ENCODE measurements at regions of chr7 and their contacts with region 1.

Region 1: DNA sequence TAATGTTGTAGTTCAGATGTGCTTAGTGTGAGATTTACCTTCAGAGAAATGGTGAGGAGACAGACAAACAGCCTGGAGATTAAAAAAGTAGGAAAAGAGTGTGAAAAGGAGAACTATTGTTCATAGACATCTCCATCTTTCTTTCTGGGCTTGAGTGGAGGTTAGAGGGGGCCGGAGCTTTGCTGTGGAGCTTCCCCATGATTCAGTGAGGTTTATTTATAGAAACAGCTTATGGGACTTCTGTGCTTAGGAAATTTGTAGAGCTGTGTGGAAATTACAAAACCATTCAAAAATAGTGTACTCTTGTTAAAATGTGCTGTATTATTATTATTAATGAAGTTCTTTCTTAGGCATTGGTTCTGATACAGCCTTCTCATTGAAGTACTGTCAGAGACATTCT is 8.5 kb upstream of the TCAF1 start:
- DNase-seq: no peak
- H3K4me3 Mint-ChIP-seq: no peak overlapping the region
- H3K27ac Mint-ChIP-seq: no peak overlapping the region
- H3K4me1 Mint-ChIP-seq: no peaks in the 10 kb centered on the region
- H3K27me3 Mint-ChIP-seq: peaks cover 3% of the 10 kb centered on the region

Region 2: DNA sequence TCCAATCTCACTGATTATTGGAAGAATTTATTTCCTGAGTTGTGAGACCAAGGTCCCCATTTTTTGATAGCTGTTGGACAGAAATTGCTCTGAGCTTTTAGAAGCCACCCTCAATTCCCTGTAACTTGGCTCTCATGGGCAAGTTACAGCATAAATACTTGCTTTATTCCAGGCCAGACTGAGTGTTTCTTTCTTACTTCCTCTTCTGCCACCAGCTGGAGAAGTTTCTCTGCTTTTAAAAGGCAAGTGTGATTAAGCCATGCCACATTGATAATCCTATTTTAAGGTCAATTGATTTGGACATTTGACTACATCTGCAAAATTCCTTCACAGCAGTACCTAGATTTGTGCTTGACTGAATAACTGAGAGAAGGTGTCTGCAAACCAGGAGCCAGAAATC is 446.9 kb before region 1 on chr7:
- CTCF ChIA-PET with region 1: no interaction called
- POLR2A ChIA-PET with region 1: no interaction called
- intact Hi-C with region 1: no loop called
- DNase-seq: no peak
- H3K4me3 Mint-ChIP-seq: no peak overlapping the region
- H3K27ac Mint-ChIP-seq: no peak overlapping the region
- H3K4me1 Mint-ChIP-seq: no peaks in the 10 kb centered on the region
- H3K27me3 Mint-ChIP-seq: no peaks in the 10 kb centered on the region

Region 3: GRCh38 chr7:144118339-144118738 is 207.9 kb after region 1 on chr7:
- CTCF ChIA-PET with region 1: no interaction called
- POLR2A ChIA-PET with region 1: no interaction called
- intact Hi-C with region 1: loop called (anchors 1 kb)
- DNase-seq: no peak
- H3K4me3 Mint-ChIP-seq: no peak overlapping the region
- H3K27ac Mint-ChIP-seq: no peak overlapping the region
- H3K4me1 Mint-ChIP-seq: no peaks in the 10 kb centered on the region
- H3K27me3 Mint-ChIP-seq: no peaks in the 10 kb centered on the region

Measured in activated CD4-positive, alpha-beta memory T cell treated with anti-CD3 and anti-CD28 coated beads for 36 hours (primary cell).